ENCODE measurements at regions of chr1 and their contacts with region 1.

Region 1: DNA sequence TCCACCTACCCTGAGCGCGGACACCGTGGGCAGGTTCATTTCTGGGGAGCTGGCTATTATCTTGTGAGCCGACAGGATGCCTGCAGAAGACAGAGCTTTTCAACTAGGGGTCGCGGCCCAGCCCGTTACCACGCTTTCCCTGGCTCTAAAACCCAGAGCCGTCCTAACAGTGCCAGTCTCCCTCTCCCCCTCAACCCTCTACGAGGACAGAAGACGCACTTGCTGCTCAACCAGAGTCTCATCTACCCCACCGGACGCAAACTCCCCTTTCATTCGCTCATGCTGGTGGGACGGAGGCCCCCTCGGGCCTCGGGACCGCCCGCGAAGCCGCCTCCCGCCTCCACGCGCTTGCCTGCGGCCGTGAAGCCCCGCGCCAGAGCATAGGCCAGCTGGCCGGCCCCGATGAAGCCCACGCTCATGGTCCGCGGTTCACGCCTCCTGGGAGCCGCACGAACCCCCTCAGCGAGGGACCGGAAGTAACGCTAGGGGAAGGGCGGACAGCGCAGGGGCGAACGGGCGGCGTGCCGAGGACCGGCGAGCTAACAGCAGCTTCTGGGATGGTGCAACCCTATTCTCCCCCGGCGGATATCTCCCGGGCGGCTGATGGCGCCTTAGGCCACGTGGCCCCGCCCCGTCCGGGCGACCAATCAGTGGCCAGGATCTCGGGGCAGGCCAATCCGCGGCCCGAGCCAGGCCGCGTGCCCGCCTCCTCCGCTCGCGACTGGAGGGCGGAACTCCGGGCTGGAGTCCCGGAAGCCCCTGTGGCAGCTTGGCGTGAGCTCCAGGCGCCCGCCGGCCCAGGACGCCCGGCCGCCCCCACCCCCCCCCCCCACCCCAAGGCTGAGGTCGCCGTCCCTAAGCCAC is at the start of gene PYCR2:
- DNase-seq: peak; percentile 97
- ATAC-seq: peak; percentile 95
- H3K4me3 Mint-ChIP-seq: peak within 1 kb of the TSS; percentile 96
- H3K27ac Mint-ChIP-seq: peak within 1 kb of the TSS; percentile 95
- H3K4me1 Mint-ChIP-seq: peaks cover 43% of the 10 kb centered on the region
- H3K27me3 Mint-ChIP-seq: no peaks in the 10 kb centered on the region
- total RNA-seq, gene PYCR2: 118 to 125 TPM

Region 2: GRCh38 chr1:225896937-225897549 is 26.9 kb before region 1 on chr1:
- POLR2A ChIA-PET with region 1: interaction called, 14 read pairs
- DNase-seq: peak; percentile 62
- ATAC-seq: peak; percentile 94
- H3K4me3 Mint-ChIP-seq: peak overlapping the region; percentile 55
- H3K27ac Mint-ChIP-seq: peak overlapping the region; percentile 54
- H3K4me1 Mint-ChIP-seq: peaks cover 23% of the 10 kb centered on the region
- H3K27me3 Mint-ChIP-seq: peaks cover 21% of the 10 kb centered on the region

Region 3: DNA sequence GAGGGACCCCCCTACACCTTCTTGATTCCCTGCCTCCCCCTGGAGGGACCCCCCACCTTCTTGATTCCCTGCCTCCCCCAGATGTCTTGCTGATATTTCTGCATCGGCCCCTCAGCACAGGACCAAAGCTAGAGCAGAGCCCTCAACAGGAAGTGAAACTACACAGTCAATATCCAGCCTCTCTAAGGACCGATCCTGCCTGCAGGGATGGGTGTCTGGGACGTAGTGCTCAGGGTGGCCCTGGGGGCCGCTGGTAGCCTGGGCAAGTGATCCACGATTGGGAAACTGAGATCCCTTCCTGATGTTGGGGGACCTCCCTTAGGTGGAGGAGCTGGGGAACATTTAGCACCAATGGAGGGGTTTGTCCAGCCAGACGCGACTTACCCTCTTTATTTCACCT is 21.0 kb after region 1 on chr1:
- POLR2A ChIA-PET with region 1: interaction called, 12 read pairs
- DNase-seq: peak; percentile 43
- ATAC-seq: peak; percentile 86
- H3K4me3 Mint-ChIP-seq: peak overlapping the region; percentile 62
- H3K27ac Mint-ChIP-seq: peak overlapping the region; percentile 91
- H3K4me1 Mint-ChIP-seq: peaks cover 18% of the 10 kb centered on the region
- H3K27me3 Mint-ChIP-seq: peaks cover 4% of the 10 kb centered on the region

Measured in activated naive CD8-positive, alpha-beta T cell treated with anti-CD3 and anti-CD28 coated beads, Interleukin-2, amount 10 ng/mL, durations not matched to agents 7 days and 5 days (primary cell).